Activated B cell treated with CpG ODN at 0.5 μM for 24 hours (primary cell): ENCODE measurements at regions of chr5 and their contacts with region 1.

Region 1: DNA sequence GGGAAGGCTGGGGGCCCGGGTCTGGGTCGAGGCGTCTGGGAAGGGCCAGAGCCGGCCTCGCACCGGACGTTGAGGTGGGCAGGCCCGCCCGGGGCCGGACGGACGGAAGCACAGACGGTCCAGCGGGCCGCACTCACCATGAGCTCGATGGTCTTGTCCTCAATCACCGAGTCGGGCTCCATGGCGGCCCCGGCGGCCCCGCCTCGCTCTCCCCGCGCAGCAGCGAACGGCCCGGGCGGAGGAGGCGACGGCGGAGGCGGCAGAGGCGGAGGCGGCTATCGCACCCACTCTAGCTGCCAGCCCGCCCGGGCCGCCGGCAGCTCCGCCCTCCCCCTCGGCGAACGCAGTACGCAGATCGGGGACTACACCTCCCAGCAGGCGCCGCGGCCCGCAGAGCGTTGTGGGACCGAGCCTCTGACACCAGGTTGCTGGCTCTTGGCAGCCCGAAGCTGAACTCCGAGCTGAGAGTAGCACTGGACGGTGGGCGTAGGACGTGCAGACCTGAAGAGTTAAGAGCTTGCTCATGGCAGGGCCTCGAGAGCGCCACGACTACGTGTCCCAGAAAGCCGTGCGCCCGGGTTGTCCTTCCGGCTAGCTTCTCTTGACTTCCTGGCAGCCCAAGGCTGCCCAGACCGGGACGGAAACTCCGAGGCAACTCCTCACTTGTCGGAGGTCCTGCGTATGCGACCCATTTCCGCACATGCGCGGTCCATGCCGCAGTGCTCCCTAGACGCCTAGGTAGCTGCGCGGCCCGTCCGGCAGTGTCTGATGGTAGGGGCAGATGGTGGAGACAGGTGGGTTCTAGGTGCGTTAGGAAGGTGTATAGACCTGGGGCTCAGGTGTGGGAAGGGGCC is at the start of gene FBXW11:
- DNase-seq: peak; percentile 87
- ATAC-seq: peak; percentile 84
- H3K4me3 Mint-ChIP-seq: peak within 1 kb of the TSS; percentile 93
- H3K27ac Mint-ChIP-seq: peak within 1 kb of the TSS; percentile 96
- H3K4me1 Mint-ChIP-seq: peaks cover 51% of the 10 kb centered on the region
- H3K27me3 Mint-ChIP-seq: no peaks in the 10 kb centered on the region
- CTCF ChIP-seq: no peak
- total RNA-seq, gene FBXW11: 46.5 and 52.7 TPM in 2 replicates

Region 2: DNA sequence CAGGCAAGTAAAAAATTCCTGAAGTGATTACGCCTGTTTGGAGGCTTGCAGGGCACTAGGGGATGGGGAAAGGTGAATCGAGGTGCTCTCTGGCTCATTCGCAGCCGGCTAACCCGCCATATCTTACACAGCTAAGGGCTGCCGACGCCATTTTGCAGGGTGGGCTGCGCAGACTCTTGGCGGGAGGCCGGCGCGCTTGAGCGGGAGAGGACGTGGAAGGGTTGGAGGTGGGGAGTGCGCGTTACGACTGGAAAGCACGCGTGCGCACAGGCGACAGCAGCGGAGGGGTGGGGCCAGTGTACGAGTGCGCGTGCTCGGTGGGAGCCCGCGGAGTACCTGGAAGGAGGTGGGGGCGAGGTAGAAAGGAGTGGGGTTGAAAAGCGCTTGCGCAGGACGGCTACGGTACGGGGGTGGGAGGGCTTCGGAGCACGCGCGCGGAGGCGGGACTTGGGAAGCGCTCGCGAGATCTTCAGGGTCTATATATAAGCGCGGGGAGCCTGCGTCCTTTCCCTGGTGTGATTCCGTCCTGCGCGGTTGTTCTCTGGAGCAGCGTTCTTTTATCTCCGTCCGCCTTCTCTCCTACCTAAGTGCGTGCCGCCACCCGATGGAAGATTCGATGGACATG is 619.1 kb before region 1 on chr5 and contains the start of gene NPM1:
- CTCF ChIA-PET with region 1: no interaction called
- POLR2A ChIA-PET with region 1: interaction called, 10 read pairs
- intact Hi-C with region 1: loop called (anchors 5 kb)
- DNase-seq: peak; percentile 92
- ATAC-seq: peak; percentile 85
- H3K4me3 Mint-ChIP-seq: peak within 1 kb of the TSS; percentile 99
- H3K27ac Mint-ChIP-seq: peak within 1 kb of the TSS; percentile 98
- H3K4me1 Mint-ChIP-seq: peaks cover 52% of the 10 kb centered on the region
- H3K27me3 Mint-ChIP-seq: no peaks in the 10 kb centered on the region
- CTCF ChIP-seq: no peak
- total RNA-seq, gene NPM1: 1,505 and 1,563 TPM in 2 replicates

Region 3: DNA sequence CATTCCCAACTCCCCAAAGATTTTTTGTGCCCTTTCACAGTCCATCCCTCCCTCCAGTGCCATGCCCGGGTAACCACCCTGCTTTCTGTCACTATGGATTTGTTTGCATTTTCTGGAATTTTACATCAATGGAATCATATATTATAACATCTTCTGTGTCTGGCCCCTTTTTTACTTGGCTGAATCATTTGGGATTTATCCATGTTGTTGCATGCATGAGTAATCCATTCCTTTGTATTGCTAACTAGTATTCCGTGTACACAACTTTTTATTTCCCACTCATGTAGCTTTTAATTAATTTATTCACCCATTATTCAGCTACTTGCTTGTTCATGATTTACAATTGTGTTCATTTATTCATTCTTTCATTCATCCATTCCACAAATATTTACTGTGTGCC is 493.0 kb before region 1 on chr5:
- CTCF ChIA-PET with region 1: no interaction called
- POLR2A ChIA-PET with region 1: no interaction called
- intact Hi-C with region 1: no loop called
- DNase-seq: no peak
- ATAC-seq: no peak
- H3K4me3 Mint-ChIP-seq: no peak overlapping the region
- H3K27ac Mint-ChIP-seq: no peak overlapping the region
- H3K4me1 Mint-ChIP-seq: no peaks in the 10 kb centered on the region
- H3K27me3 Mint-ChIP-seq: peaks cover 3% of the 10 kb centered on the region
- CTCF ChIP-seq: no peak

Region 4: DNA sequence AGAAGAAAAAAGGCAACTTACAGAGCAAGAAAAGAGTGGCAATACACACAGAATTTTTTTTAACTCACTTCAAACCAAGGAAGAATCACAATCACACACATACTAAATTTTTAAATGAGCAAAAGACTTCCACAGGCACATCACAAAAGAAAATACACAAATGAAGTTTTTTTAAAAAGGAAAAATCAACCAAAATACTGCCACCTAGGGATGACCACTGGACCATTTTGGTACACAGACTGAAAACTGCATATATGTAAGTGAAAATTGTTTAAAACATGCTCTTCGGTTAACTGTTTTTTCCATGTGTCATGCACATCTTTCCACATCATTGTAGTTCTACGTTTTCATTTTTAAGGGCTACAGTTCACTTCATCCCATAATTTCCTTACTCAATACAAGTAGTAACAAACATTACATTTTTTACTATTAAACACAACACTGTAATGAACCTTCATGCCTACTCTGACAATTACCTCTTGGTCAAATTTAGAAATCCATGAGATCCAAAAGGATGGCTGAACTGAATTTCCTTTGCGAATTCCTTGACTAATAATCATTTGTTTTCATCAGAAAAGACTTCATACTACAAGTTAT is 79.1 kb before region 1 on chr5:
- CTCF ChIA-PET with region 1: no interaction called
- POLR2A ChIA-PET with region 1: interaction called, 4 read pairs
- intact Hi-C with region 1: loop called (anchors 2 kb)
- DNase-seq: no peak
- ATAC-seq: no peak
- H3K4me3 Mint-ChIP-seq: no peak overlapping the region
- H3K27ac Mint-ChIP-seq: peak overlapping the region; percentile 4
- H3K4me1 Mint-ChIP-seq: peaks cover 63% of the 10 kb centered on the region
- H3K27me3 Mint-ChIP-seq: no peaks in the 10 kb centered on the region
- CTCF ChIP-seq: no peak

Region 5: GRCh38 chr5:171984748-171985419 is 21.7 kb before region 1 on chr5:
- CTCF ChIA-PET with region 1: interaction called, 4 read pairs
- POLR2A ChIA-PET with region 1: interaction called, 11 read pairs
- intact Hi-C with region 1: no loop called
- DNase-seq: no peak
- ATAC-seq: peak; percentile 34
- H3K4me3 Mint-ChIP-seq: no peak overlapping the region
- H3K27ac Mint-ChIP-seq: no peak overlapping the region
- H3K4me1 Mint-ChIP-seq: peaks cover 71% of the 10 kb centered on the region
- H3K27me3 Mint-ChIP-seq: no peaks in the 10 kb centered on the region
- CTCF ChIP-seq: no peak

Region 6: GRCh38 chr5:172188033-172188892 is 181.7 kb after region 1 on chr5 and contains the start of gene STK10:
- CTCF ChIA-PET with region 1: interaction called, 10 read pairs
- POLR2A ChIA-PET with region 1: interaction called, 11 read pairs
- intact Hi-C with region 1: loop called (anchors 1 kb)
- DNase-seq: peak; percentile 88
- ATAC-seq: peak; percentile 75
- H3K4me3 Mint-ChIP-seq: peak within 1 kb of the TSS; percentile 100
- H3K27ac Mint-ChIP-seq: peak within 1 kb of the TSS; percentile 97
- H3K4me1 Mint-ChIP-seq: peaks cover 44% of the 10 kb centered on the region
- H3K27me3 Mint-ChIP-seq: no peaks in the 10 kb centered on the region
- CTCF ChIP-seq: peak; percentile 37
- total RNA-seq, gene STK10: 233 and 276 TPM in 2 replicates

Region 7: DNA sequence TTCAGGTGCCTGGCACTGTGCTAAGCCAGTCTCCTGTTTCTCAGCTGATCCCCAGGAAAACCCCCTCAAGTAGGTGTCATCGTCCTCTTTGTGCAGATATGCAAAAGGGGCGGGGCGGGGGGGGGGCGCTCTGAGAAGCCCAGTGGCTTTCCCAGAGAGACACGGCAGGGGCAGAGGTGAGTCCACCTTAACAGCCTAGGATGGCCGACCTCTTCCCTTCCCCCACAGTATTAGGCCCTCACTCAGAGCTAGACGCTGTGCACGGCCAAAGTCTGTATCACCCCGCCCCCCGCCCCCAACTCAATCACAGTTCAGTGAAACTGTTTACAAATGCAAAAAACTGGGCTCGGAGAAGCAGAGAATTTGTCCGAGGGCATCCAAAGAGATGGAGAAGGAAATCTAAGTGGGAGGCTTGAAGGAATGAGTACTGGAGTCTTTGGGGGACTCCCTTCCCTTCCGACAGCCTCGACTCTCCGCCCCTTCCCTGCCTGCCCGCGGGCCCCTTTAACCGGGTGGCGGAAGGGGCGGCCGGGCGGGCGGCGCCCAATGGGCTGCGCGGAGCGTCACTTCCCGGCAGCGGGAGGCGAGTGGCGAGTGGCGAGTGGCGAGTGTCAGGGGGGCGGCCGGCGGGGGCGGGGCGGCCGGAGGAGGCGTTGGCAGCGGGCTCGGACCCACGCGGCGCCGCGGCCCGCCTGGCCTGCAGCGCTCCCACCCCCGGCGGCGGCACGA is 827.3 kb after region 1 on chr5 and contains the start of gene ERGIC1:
- CTCF ChIA-PET with region 1: no interaction called
- POLR2A ChIA-PET with region 1: no interaction called
- intact Hi-C with region 1: loop called (anchors 10 kb)
- DNase-seq: peak; percentile 79
- ATAC-seq: peak; percentile 78
- H3K4me3 Mint-ChIP-seq: peak within 1 kb of the TSS; percentile 89
- H3K27ac Mint-ChIP-seq: peak within 1 kb of the TSS; percentile 92
- H3K4me1 Mint-ChIP-seq: peaks cover 48% of the 10 kb centered on the region
- H3K27me3 Mint-ChIP-seq: no peaks in the 10 kb centered on the region
- CTCF ChIP-seq: no peak
- total RNA-seq, gene ERGIC1: 69.6 and 72.5 TPM in 2 replicates

Region 8: GRCh38 chr5:173138707-173139106 is 1132.2 kb after region 1 on chr5:
- CTCF ChIA-PET with region 1: no interaction called
- POLR2A ChIA-PET with region 1: no interaction called
- intact Hi-C with region 1: no loop called
- DNase-seq: no peak
- ATAC-seq: no peak
- H3K4me3 Mint-ChIP-seq: no peak overlapping the region
- H3K27ac Mint-ChIP-seq: no peak overlapping the region
- H3K4me1 Mint-ChIP-seq: no peaks in the 10 kb centered on the region
- H3K27me3 Mint-ChIP-seq: no peaks in the 10 kb centered on the region
- CTCF ChIP-seq: no peak